ENCODE measurements at regions of chr6 and their contacts with region 1.

Region 1: DNA sequence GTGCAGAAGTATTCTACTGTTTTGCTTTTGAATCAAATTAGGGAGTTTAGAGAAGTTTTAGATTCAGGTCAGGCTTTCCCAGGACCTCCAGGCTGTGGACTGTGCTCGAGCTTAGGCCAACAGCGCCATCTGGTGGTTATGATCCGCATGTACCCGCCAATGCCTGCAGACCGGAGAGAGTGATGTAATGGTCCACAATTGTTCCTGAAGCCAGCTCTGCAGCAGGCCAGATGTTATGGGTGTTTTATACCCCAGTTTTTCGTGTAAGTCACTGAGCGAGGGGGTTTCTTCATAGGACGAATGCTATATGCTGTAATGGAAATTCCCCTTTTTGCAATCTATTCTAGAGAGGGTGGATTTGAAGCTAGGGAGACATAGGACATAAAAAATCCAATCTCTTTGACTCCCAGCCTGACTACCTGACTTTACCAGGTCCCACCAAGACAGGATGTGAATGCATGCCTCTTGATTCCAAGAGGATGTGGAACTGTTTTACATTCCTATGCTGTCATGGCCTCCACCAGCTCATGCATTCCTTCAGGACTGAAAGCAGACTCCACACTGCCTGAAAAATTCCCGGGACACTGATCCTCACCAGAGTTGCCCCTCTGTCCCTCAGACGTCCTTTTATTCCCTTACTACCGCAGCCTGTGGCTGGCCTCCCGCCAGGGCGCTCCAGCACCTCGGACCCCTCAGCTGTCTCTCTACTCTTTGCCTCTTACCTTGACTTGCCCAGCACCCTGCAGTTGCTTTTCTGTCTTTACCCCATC is 41.2 kb upstream of the LY86 start:
- DNase-seq: peak; percentile 69 to 91
- H3K4me3 ChIP-seq: peak overlapping the region; percentile 25 to 67 (median 58); a peak in 7 of 8 replicates
- H3K27ac ChIP-seq: no peak overlapping the region
- H3K4me1 ChIP-seq: peaks cover 5 to 11% (median 7%) of the 10 kb centered on the region in 4 experiments
- H3K27me3 ChIP-seq: peaks cover 2 to 20% (median 13%) of the 10 kb centered on the region in 4 experiments; a peak in 6 of 7 replicates
- CTCF ChIP-seq: peak; percentile 79 to 95 (median 94)
- EP300 ChIP-seq: no peak; a peak in 1 of 3 replicates
- POLR2A ChIP-seq: no peak
- RAD21 ChIP-seq: peak; percentile 93 to 94

Region 2: DNA sequence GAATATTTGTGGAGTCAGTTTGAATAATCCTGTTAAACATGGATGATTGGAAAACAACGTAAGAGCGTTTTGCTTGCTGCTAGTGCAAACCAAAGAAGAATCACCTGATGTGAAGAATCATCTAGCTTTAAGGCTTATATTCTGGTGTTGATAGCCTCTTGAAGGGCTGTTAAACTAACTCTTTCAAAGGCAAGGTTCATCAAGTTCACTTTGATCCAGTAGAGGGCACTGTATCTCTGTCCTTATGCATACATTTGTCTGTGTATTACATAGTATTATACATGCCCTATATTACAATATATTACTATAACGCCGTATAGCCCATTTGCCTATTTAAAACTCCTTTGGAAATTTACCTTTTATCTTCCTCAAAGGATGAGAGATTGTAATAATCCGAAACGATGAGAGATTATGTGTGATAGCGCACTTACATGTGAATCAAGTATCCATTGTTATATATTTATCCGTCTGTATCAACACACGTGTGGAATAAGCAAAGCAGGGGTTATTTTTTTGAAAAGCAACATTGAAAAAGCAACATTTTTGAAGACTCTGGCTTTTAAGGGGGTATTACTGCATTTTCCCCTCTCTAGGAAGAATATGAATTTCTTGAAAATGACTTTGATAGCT is 489.8 kb before region 1 on chr6:
- CTCF ChIA-PET with region 1: interaction called, 31 read pairs
- POLR2A ChIA-PET with region 1: no interaction called
- DNase-seq: no peak
- H3K4me3 ChIP-seq: no peak overlapping the region
- H3K27ac ChIP-seq: no peak overlapping the region
- H3K4me1 ChIP-seq: no peaks in the 10 kb centered on the region
- H3K27me3 ChIP-seq: no peaks in the 10 kb centered on the region
- CTCF ChIP-seq: peak in 2 of 3 experiments; percentile 44 to 68; a peak in 2 of 4 replicates
- EP300 ChIP-seq: no peak
- POLR2A ChIP-seq: no peak
- RAD21 ChIP-seq: peak; percentile 63 to 67

Region 3: GRCh38 chr6:6525933-6526332 is 21.4 kb before region 1 on chr6:
- CTCF ChIA-PET with region 1: interaction called, 11 read pairs
- POLR2A ChIA-PET with region 1: no interaction called
- DNase-seq: no peak
- H3K4me3 ChIP-seq: no peak overlapping the region
- H3K27ac ChIP-seq: no peak overlapping the region
- H3K4me1 ChIP-seq: no peaks in the 10 kb centered on the region
- H3K27me3 ChIP-seq: no peaks in the 10 kb centered on the region; a peak in 2 of 7 replicates
- CTCF ChIP-seq: no peak
- EP300 ChIP-seq: no peak
- POLR2A ChIP-seq: no peak
- RAD21 ChIP-seq: no peak

Region 4: DNA sequence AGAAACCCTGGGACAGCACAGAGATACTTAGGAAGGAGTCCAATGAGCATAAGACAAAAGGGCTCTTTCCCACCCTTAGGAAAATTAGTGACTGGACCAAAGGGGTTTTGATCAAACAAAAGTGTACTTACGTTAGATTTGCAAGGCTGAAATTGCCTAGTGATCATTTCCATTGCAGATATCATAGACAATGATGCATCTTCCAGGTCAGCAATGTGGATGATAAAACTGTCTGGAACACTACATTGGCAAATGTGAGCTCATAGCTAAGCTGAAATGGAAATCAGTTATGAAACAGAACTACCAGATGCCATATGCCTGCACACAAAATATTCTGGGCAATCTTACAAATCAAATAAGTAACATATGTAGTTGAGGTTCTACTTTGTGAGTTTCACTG is 75.2 kb after region 1 on chr6:
- CTCF ChIA-PET with region 1: no interaction called
- POLR2A ChIA-PET with region 1: no interaction called
- DNase-seq: no peak
- H3K4me3 ChIP-seq: no peak overlapping the region
- H3K27ac ChIP-seq: no peak overlapping the region
- H3K4me1 ChIP-seq: no peaks in the 10 kb centered on the region; a peak in 1 of 7 replicates
- H3K27me3 ChIP-seq: no peaks in the 10 kb centered on the region; a peak in 1 of 7 replicates
- CTCF ChIP-seq: no peak
- EP300 ChIP-seq: no peak
- POLR2A ChIP-seq: no peak
- RAD21 ChIP-seq: no peak

Region 5: GRCh38 chr6:6811151-6812002 is 264.1 kb after region 1 on chr6:
- CTCF ChIA-PET with region 1: no interaction called
- POLR2A ChIA-PET with region 1: no interaction called
- DNase-seq: peak; percentile 50 to 57
- H3K4me3 ChIP-seq: peak overlapping the region in 1 of 4 experiments; percentile 4; a peak in 3 of 8 replicates
- H3K27ac ChIP-seq: no peak overlapping the region
- H3K4me1 ChIP-seq: peaks cover 2 to 4% (median 4%) of the 10 kb centered on the region in 4 experiments
- H3K27me3 ChIP-seq: no peaks in the 10 kb centered on the region
- CTCF ChIP-seq: no peak
- EP300 ChIP-seq: peak in 1 of 2 experiments; percentile 65; a peak in 1 of 3 replicates
- POLR2A ChIP-seq: no peak
- RAD21 ChIP-seq: no peak

Measured in H1 (cell line).